GM10248 (cell line): ENCODE measurements at regions of chr1 and their contacts with region 1.

Region 1: DNA sequence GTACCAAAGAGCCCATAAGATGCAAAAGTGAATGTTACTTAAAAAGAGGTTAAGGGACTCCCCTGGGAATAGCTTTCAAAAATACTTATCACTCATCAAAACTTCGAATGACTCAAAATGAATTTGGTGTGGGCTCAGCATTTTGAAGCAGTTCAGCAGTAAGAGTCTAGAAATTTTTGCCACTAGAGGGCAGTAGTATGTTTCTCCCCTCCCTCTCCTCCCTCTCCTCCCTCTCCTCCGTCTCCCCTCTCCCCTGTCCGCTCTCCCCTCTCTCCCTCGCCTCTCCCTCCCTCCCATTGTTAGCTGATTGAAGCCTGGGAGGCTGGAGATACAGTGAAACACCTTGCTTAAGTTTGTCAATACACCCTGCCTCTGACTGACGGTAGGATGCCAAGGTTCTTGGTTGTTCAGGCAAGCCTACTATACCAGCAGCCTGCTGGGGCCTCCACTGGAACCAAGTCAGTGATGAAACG is 70.8 kb upstream of the TENT5C start:
- DNase-seq: peak; percentile 55
- CTCF ChIP-seq: peak; percentile 53

Region 2: DNA sequence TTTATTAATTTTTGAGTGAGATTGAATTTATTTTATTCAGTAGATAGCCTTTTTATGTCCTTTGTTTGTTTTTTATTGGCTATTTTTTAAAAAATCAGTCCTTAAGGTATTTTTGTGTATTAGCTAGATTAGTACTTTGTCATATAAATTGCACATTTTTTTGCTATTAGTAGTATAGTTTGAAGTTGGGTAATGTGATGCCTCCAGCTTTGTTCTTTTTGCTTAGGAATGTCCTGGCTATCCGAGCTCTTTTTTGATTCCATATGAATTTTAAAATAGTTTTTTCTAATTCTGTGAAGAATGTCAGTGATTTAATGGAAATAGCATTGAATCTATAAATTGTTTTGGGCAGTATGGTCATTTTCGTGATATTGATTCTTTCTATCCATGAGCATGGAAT is 87.4 kb before region 1 on chr1:
- CTCF ChIA-PET with region 1: no interaction called
- POLR2A ChIA-PET with region 1: no interaction called
- DNase-seq: no peak
- CTCF ChIP-seq: no peak

Region 3: GRCh38 chr1:117501281-117501680 is 33.8 kb before region 1 on chr1:
- CTCF ChIA-PET with region 1: interaction called, 12 read pairs
- POLR2A ChIA-PET with region 1: no interaction called
- DNase-seq: no peak
- CTCF ChIP-seq: no peak

Region 4: GRCh38 chr1:117573386-117574023 is 38.5 kb after region 1 on chr1:
- CTCF ChIA-PET with region 1: interaction called, 15 read pairs
- POLR2A ChIA-PET with region 1: no interaction called
- DNase-seq: no peak
- CTCF ChIP-seq: no peak

Region 5: DNA sequence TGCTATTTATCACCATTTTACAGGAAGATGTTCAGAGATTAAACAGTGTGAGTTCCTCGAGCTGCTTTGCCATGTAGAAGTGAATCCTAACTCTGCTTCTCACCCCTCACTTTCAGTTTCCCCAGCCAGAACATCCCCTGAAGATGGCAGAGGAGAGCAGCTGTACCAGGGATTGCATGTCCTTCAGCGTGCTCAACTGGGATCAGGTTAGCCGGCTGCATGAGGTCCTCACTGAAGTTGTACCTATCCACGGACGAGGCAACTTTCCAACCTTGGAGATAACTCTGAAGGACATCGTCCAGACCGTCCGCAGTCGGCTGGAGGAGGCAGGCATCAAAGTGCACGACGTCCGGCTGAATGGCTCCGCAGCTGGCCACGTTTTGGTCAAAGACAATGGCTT is 87.7 kb after region 1 on chr1:
- CTCF ChIA-PET with region 1: interaction called, 12 read pairs
- POLR2A ChIA-PET with region 1: no interaction called
- DNase-seq: no peak
- CTCF ChIP-seq: no peak

Region 6: GRCh38 chr1:117695796-117696490 is 160.9 kb after region 1 on chr1:
- CTCF ChIA-PET with region 1: interaction called, 16 read pairs
- POLR2A ChIA-PET with region 1: no interaction called
- DNase-seq: no peak
- CTCF ChIP-seq: no peak

Region 7: DNA sequence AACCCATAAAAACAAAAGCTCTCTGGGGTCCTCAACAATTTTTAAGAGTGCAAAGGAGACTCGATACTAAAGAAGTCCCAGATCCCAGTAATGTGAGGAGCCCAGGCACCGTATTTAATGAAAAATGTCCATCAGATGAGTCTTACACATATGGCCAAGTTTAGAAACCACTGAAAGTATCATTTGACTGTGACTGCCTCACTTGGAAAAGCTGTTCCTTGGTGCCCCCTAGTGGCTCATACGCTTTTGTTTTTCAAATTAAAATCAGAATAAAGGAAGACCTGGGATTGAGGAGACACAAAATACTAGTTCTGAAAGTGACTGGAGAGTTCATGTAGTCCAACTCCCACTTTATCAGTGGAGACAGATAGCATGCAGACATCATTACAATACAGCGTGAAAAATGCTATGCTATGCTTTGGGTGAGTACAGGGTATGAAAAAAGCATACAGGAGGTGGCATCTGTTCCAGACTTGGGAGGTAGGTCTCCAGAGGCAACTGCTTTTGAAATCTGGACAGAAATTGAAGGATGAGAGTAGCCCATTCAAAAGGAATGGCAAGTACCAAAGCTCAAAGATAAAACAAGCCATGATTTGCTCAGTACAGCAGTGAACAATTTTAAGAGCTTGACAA is 360.6 kb after region 1 on chr1:
- CTCF ChIA-PET with region 1: interaction called, 19 read pairs
- POLR2A ChIA-PET with region 1: no interaction called
- DNase-seq: peak; percentile 53
- CTCF ChIP-seq: peak; percentile 71